ENCODE measurements at regions of chr3 and their contacts with region 1.

Region 1: GRCh38 chr3:116067326-116067725 is 378.0 kb downstream of the LSAMP start:
- DNase-seq: no peak
- ATAC-seq: no peak
- H3K4me3 ChIP-seq: no peak overlapping the region
- H3K27ac ChIP-seq: no peak overlapping the region
- H3K4me1 ChIP-seq: no peaks in the 10 kb centered on the region
- H3K27me3 ChIP-seq: no peaks in the 10 kb centered on the region
- CTCF ChIP-seq: no peak
- EP300 ChIP-seq: no peak
- POLR2A ChIP-seq: no peak
- RAD21 ChIP-seq: no peak

Region 2: GRCh38 chr3:115960799-115961198 is 106.5 kb before region 1 on chr3:
- CTCF ChIA-PET with region 1: no interaction called
- POLR2A ChIA-PET with region 1: no interaction called
- in situ Hi-C with region 1: no loop called
- intact Hi-C with region 1: no loop called
- DNase-seq: no peak
- ATAC-seq: no peak
- H3K4me3 ChIP-seq: no peak overlapping the region
- H3K27ac ChIP-seq: no peak overlapping the region
- H3K4me1 ChIP-seq: no peaks in the 10 kb centered on the region
- H3K27me3 ChIP-seq: no peaks in the 10 kb centered on the region
- CTCF ChIP-seq: no peak
- EP300 ChIP-seq: no peak
- POLR2A ChIP-seq: no peak
- RAD21 ChIP-seq: no peak

Region 3: DNA sequence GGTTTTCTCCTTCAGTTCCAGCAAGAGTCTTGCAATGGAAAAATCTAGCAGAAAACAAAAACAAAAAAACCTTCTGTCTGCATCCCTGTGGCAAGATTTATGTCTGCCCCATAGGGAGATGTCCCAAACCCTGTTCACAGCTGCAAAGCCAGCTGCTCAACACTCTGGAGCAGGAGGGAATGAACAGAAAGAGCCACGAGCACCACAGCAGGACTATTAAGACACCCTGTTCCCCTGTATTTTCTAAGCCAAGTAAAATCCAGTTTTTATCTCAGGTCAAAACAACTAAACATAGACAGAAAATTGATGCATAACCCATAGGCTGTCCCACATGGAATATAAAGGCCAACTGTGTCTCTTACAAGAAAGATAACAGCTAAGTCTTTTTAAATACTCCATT is 20.1 kb after region 1 on chr3:
- CTCF ChIA-PET with region 1: no interaction called
- POLR2A ChIA-PET with region 1: no interaction called
- in situ Hi-C with region 1: no loop called
- intact Hi-C with region 1: loop called (anchors 2 kb)
- DNase-seq: no peak
- ATAC-seq: no peak
- H3K4me3 ChIP-seq: no peak overlapping the region
- H3K27ac ChIP-seq: no peak overlapping the region
- H3K4me1 ChIP-seq: no peaks in the 10 kb centered on the region
- H3K27me3 ChIP-seq: no peaks in the 10 kb centered on the region; a peak in 2 of 5 replicates
- CTCF ChIP-seq: no peak
- EP300 ChIP-seq: no peak
- POLR2A ChIP-seq: no peak
- RAD21 ChIP-seq: no peak

Measured in HepG2 (cell line).